ENCODE measurements at regions of chr14 and their contacts with region 1.

Region 1: DNA sequence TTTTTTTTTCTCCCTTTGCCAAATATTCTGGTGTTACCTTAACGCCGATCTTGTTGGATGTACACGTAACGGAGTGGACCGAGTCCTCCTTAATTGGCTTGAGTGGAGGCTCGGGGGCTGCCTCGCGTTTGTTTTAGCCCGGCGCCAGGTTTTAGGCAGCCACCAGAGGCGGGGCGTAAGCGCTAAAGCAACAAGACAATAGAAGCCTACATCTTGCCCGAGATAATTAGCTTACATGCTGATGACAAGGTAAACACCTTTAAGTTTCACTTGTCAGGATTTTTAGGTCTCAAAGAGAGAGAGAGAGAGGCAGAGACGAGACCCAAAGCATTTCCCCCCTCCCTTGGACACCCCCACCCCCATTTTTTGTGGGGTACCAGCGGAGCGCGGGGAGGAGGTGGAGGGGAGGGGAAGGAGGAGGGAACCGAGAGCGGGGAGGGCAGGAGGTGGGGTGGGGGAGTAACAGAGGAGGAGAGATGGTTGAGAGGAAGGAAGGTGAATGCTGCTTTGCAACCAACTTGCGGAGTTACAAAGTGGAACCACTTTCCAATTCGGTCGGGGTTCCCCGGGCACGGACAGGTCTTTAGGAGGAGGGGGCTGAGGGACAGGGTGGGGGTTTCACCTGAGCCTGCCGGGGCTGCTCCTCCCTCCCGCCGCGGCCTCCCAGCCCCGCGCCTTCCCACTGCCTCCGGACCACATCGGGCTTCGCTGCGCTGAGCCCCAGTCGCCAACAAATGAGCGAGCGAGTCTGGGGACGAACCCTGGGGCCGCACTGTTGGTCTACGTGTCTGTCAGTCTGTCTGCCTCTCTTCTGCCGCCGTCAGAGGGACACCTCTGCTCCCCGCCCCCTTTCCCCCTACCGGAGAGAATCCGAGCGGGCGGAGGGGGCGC is at the start of gene NKX2-1:
- DNase-seq: peak; percentile 90 to 91
- H3K4me3 ChIP-seq: peak within 1 kb of the TSS; percentile 80 to 87 (median 81)
- H3K27ac ChIP-seq: peak within 1 kb of the TSS; percentile 98 to 100 (median 99)
- H3K4me1 ChIP-seq: peaks cover 14 to 25% of the 10 kb centered on the region in 2 donors
- H3K27me3 ChIP-seq: no peaks in the 10 kb centered on the region
- CTCF ChIP-seq: peak in 3 of 6 experiments; percentile 16 to 35 (median 32)
- POLR2A ChIP-seq: peak; percentile 57 to 91
- total RNA-seq, gene NKX2-1: 209 to 375 (median 310) TPM

Region 2: DNA sequence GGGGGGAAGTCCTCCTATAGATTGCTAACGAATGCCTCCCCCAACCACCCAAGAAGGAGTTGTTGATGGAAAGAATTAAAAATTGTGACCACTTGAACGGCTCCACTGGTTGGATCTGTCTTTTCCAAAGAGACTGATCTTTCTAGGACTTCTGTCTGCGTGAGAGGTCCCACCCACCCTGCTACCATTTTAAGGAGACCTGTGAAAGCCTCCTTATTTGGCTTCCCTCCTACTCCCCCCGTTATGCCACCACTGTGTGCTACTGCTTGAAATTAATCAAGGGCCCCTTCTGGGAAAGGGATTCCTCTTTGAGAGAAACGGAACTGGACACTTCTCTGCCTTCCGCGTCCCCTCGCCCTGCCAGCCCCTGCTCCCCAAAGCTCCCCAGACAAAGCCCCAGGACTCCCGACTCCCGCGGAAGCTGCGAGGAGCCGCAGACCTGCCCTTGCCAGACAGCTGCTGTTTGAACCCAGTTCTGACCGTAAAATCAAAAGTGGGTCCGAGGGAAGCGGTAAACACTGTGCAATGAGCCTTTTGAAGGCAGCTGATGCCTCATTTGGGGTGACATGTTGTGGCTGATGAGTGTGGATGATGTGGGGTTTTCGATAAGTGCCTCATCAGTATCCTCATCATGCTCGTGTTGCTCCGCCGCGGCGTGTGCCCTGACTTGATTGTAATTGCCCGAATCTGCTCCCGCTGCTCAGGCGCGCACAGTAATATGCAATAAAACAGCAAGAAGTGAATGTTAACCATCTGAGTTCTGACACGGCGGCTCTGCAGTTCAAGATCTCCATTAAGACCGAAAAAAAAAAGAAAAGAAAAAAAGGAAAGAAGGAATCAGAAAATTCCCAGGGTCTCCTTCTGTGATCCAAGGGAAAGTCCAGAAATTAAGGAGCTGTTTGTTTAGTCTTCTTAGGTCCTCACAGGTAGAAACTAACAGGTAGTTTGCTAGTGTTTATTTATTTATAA is 247.5 kb before region 1 on chr14:
- intact Hi-C with region 1: loop called (anchors 5 kb)
- DNase-seq: peak; percentile 57
- H3K4me3 ChIP-seq: peak overlapping the region; percentile 14 to 76 (median 36)
- H3K27ac ChIP-seq: peak overlapping the region; percentile 96 to 98 (median 97)
- H3K4me1 ChIP-seq: peaks cover 24 to 55% of the 10 kb centered on the region in 2 donors
- H3K27me3 ChIP-seq: no peaks in the 10 kb centered on the region
- CTCF ChIP-seq: no peak
- POLR2A ChIP-seq: peak in 1 of 2 donors; percentile 47

Region 3: GRCh38 chr14:36315159-36315853 is 204.4 kb before region 1 on chr14:
- intact Hi-C with region 1: loop called (anchors 5 kb)
- DNase-seq: no peak
- H3K4me3 ChIP-seq: no peak overlapping the region
- H3K27ac ChIP-seq: peak overlapping the region; percentile 22 to 98 (median 70)
- H3K4me1 ChIP-seq: peaks cover 19 to 23% of the 10 kb centered on the region in 2 donors
- H3K27me3 ChIP-seq: no peaks in the 10 kb centered on the region
- CTCF ChIP-seq: no peak
- POLR2A ChIP-seq: peak in 1 of 2 donors; percentile 36

Region 4: DNA sequence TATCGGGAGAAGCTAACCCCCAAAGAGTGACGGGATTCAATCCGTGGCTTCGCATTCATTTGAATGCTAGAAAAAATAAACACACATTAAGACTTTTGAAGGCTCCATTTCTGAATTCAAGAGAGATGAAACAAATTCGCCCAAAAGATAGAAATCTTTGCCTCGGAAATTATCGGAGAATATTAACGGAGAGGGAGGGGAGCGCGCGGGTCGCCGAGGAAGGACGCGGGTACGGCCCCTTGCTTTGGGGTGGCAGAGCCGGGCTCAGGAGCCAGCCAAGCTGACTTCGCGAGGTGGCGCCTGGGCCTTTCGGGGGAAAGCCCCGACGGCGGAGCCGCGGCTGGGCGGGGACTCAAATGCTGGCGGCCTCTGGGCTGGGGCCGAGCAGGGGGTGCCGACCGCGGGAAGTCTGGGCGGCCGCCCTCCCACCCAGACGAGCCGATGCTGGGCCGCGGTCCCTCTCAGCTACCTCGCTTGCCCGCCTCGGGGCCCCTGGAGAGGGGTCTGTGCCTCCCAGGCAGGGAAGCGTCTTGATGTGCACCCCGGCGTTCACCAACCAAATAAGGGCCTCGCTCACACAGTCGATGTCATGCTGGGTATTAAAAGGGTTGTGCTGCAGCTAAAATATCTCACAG is 14.4 kb before region 1 on chr14:
- intact Hi-C with region 1: loop called (anchors 2 kb)
- DNase-seq: peak; percentile 67 to 74
- H3K4me3 ChIP-seq: peak overlapping the region; percentile 1 to 81 (median 7)
- H3K27ac ChIP-seq: peak overlapping the region; percentile 98 to 100 (median 99)
- H3K4me1 ChIP-seq: peaks cover 0 to 16% of the 10 kb centered on the region in 2 donors
- H3K27me3 ChIP-seq: no peaks in the 10 kb centered on the region
- CTCF ChIP-seq: no peak
- POLR2A ChIP-seq: peak; percentile 33 to 69